ENCODE measurements at regions of chr13 and their contacts with region 1.

Region 1: DNA sequence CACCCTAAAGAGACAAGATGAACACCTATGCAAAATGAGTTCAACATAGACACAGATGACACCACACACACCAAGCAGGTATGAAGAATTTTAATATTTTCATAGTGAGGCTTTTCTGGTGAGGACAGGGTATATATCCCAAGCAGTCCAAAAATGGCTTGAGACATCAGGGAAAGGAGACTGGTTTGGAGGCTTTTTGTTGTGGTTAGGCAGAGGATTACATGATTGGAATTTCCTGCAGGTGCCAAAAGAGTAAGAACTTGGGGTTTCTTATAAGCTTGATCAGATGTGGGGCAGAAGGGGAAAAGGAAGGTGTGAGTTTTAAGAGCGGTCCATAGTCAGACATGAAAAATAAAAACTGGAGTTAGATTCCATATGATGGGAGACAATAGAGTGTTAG is 420.8 kb upstream of the SLITRK1 start:
- DNase-seq: no peak
- H3K4me3 ChIP-seq: no peak overlapping the region
- H3K4me3 Mint-ChIP-seq: no peak overlapping the region
- H3K27ac Mint-ChIP-seq: no peak overlapping the region
- H3K4me1 ChIP-seq: no peaks in the 10 kb centered on the region
- H3K4me1 Mint-ChIP-seq: peaks cover 6% of the 10 kb centered on the region
- H3K27me3 ChIP-seq: no peaks in the 10 kb centered on the region
- H3K27me3 Mint-ChIP-seq: peaks cover 2% of the 10 kb centered on the region
- CTCF ChIP-seq: no peak

Region 2: DNA sequence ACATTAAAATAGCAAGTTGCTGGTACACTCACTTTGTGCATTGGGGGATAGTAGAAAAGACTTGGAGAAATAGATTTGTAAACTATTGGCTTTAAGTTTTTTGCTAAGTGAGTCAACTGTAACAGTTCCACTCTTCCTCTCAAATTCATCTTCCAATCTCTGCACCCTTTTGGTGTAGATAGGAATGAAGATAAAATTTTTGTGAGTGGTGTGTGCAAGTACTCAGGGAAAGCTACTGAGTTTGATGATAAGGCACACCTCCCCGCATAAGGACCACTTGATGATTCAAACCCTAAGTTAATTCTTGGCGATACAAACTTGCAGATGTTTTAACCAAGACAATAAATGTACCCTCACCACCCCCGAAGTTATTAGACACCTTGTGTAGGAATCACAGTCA is 252.5 kb before region 1 on chr13:
- CTCF ChIA-PET with region 1: no interaction called
- POLR2A ChIA-PET with region 1: no interaction called
- intact Hi-C with region 1: no loop called
- DNase-seq: no peak
- H3K4me3 ChIP-seq: no peak overlapping the region
- H3K4me3 Mint-ChIP-seq: no peak overlapping the region
- H3K27ac Mint-ChIP-seq: no peak overlapping the region
- H3K4me1 ChIP-seq: no peaks in the 10 kb centered on the region
- H3K4me1 Mint-ChIP-seq: no peaks in the 10 kb centered on the region
- H3K27me3 ChIP-seq: no peaks in the 10 kb centered on the region
- H3K27me3 Mint-ChIP-seq: peaks cover 3% of the 10 kb centered on the region
- CTCF ChIP-seq: no peak

Region 3: DNA sequence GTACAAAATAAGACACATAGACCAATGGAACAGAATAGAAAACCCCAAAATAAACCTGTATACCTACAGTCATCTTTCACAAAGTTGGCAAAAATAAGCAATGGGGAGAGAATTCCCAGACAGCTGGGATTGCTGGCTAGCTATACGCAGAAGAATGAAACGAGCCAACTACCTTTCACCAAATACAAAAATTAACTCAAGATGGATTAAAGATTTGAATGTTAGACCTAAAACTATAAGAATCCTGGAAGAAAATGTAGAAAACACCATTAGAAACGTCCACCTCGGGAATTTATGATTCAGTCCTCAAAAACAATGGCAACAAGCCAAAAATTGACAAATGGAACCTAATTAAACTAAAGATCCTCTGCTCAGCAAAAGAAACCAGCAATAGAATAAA is 12.6 kb before region 1 on chr13:
- CTCF ChIA-PET with region 1: no interaction called
- POLR2A ChIA-PET with region 1: no interaction called
- intact Hi-C with region 1: no loop called
- DNase-seq: no peak
- H3K4me3 ChIP-seq: no peak overlapping the region
- H3K4me3 Mint-ChIP-seq: no peak overlapping the region
- H3K27ac Mint-ChIP-seq: no peak overlapping the region
- H3K4me1 ChIP-seq: no peaks in the 10 kb centered on the region
- H3K4me1 Mint-ChIP-seq: no peaks in the 10 kb centered on the region
- H3K27me3 ChIP-seq: no peaks in the 10 kb centered on the region
- H3K27me3 Mint-ChIP-seq: peaks cover 7% of the 10 kb centered on the region
- CTCF ChIP-seq: no peak

Region 4: GRCh38 chr13:84339456-84339855 is 36.4 kb after region 1 on chr13:
- CTCF ChIA-PET with region 1: no interaction called
- POLR2A ChIA-PET with region 1: no interaction called
- intact Hi-C with region 1: loop called (anchors 2 kb)
- DNase-seq: no peak
- H3K4me3 ChIP-seq: no peak overlapping the region
- H3K4me3 Mint-ChIP-seq: no peak overlapping the region
- H3K27ac Mint-ChIP-seq: no peak overlapping the region
- H3K4me1 ChIP-seq: no peaks in the 10 kb centered on the region
- H3K4me1 Mint-ChIP-seq: no peaks in the 10 kb centered on the region
- H3K27me3 ChIP-seq: no peaks in the 10 kb centered on the region
- H3K27me3 Mint-ChIP-seq: no peaks in the 10 kb centered on the region
- CTCF ChIP-seq: no peak

Region 5: DNA sequence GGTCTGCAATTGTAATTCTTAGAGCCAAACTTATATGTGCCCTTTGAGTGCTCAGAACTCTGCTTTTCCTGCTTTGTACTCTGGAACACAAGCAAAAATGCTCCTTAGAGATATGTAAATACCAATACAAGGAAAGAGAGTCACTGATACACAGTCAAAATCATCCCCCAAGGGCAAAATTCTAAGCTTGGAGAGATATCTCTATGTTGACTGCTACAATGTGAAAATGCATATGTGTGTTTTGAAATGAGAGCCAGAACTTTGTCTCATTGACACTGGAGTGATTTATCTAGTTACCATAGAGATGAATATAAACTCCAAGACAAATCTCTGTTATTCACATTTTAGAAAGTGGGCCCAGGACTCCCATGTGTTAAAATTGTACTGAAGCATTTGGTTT is 74.1 kb after region 1 on chr13:
- CTCF ChIA-PET with region 1: no interaction called
- POLR2A ChIA-PET with region 1: no interaction called
- intact Hi-C with region 1: loop called (anchors 2 kb)
- DNase-seq: no peak
- H3K4me3 ChIP-seq: no peak overlapping the region
- H3K4me3 Mint-ChIP-seq: no peak overlapping the region
- H3K27ac Mint-ChIP-seq: no peak overlapping the region
- H3K4me1 ChIP-seq: no peaks in the 10 kb centered on the region
- H3K4me1 Mint-ChIP-seq: no peaks in the 10 kb centered on the region
- H3K27me3 ChIP-seq: no peaks in the 10 kb centered on the region
- H3K27me3 Mint-ChIP-seq: peaks cover 5% of the 10 kb centered on the region
- CTCF ChIP-seq: no peak